ENCODE measurements at regions of chr4 and their contacts with region 1.

Region 1: GRCh38 chr4:153573881-153574802 is 108.0 kb downstream of the TMEM131L start:
- DNase-seq: peak; percentile 64
- H3K4me3 ChIP-seq: no peak overlapping the region
- H3K27ac ChIP-seq: no peak overlapping the region
- H3K27me3 ChIP-seq: no peaks in the 10 kb centered on the region
- CTCF ChIP-seq: peak; percentile 74

Region 2: DNA sequence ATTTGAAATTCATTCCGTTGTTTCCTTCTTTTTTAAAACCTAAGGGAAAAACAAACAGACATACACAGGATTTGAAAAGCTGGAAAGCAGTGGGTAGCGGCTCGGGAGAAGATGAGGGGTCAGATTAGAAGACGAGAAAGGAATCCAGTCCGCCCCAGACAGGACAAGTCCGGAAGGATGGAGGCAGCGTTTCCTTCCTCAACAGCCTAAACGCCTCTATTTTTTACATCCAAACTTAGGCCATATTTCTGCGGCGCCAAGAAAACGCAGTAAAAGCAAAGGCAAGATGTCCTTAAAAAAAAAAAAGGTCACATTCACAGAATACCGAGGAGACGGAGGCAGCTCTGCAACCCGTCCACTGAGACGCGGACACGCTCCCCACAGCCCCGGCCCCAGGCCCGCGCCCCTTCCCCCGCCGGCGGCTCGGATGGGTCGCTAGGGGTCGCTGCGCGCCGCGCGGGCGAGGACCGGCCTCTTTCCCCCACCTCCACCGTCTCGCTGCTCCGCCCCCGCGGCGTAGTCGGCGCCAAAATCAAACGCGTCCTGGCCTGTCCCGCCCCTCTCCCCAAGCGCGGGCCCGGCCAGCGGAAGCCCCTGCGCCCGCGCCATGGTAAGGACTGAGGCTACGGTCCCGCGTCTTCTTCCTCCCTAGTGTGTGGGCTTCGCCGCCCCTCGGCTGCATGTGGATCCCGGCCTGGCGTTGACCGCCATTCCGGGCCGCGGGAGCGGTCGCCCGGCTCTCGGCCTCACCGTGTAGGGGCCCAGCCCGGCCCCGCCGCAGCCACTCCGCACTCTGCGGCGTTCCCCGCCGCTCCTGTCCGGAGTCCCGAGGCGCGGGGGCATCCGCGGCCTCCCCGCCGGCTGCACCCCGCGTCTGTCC is 229.8 kb before region 1 on chr4 and contains the start of gene MND1:
- CTCF ChIA-PET with region 1: interaction called, 105 read pairs
- POLR2A ChIA-PET with region 1: no interaction called
- DNase-seq: no peak
- H3K4me3 ChIP-seq: peak within 1 kb of the TSS; percentile 79
- H3K27ac ChIP-seq: no peak within 1 kb of the TSS
- H3K27me3 ChIP-seq: no peaks in the 10 kb centered on the region
- CTCF ChIP-seq: peak; percentile 77
- polyA plus RNA-seq, gene MND1: 0.97 and 2.2 TPM in 2 replicates

Region 3: GRCh38 chr4:153448003-153448731 is 126.0 kb before region 1 on chr4:
- CTCF ChIA-PET with region 1: interaction called, 14 read pairs
- POLR2A ChIA-PET with region 1: no interaction called
- DNase-seq: peak; percentile 56
- H3K4me3 ChIP-seq: no peak overlapping the region
- H3K27ac ChIP-seq: no peak overlapping the region
- H3K27me3 ChIP-seq: no peaks in the 10 kb centered on the region
- CTCF ChIP-seq: no peak

Region 4: DNA sequence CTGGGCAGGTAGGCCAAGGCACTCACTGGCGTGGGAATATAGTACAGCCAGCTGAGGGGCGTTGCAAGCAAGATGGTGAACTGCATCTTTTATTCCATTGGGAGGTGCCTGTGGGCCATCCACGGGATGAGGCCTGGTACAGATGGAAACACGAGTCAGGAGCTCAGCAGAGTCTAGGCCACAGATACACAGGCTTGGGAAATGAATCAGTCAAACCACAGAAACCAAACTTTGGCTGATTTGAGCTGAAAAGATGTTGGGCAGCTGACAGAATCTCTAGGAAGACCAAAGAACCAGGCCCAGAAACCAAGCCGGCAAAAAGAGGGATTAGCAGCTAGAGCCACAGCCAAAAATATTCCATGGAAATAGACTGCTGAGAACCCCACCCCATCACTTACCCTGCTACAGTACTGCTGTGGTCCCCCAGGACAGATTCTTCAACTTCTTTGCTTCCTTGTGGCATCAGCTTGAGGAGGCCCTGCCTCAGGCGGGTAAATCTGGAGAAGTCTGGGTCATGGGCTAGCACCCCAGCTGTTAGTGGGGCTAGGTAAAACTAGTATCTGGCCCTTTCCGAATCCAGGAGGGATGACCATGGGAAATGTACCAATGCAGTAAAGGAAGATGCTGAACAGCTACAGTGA is 32.6 kb before region 1 on chr4:
- CTCF ChIA-PET with region 1: interaction called, 21 read pairs
- POLR2A ChIA-PET with region 1: interaction called, 3 read pairs
- DNase-seq: peak; percentile 78
- H3K4me3 ChIP-seq: no peak overlapping the region
- H3K27ac ChIP-seq: peak overlapping the region; percentile 63
- H3K27me3 ChIP-seq: no peaks in the 10 kb centered on the region
- CTCF ChIP-seq: peak; percentile 39

Region 5: DNA sequence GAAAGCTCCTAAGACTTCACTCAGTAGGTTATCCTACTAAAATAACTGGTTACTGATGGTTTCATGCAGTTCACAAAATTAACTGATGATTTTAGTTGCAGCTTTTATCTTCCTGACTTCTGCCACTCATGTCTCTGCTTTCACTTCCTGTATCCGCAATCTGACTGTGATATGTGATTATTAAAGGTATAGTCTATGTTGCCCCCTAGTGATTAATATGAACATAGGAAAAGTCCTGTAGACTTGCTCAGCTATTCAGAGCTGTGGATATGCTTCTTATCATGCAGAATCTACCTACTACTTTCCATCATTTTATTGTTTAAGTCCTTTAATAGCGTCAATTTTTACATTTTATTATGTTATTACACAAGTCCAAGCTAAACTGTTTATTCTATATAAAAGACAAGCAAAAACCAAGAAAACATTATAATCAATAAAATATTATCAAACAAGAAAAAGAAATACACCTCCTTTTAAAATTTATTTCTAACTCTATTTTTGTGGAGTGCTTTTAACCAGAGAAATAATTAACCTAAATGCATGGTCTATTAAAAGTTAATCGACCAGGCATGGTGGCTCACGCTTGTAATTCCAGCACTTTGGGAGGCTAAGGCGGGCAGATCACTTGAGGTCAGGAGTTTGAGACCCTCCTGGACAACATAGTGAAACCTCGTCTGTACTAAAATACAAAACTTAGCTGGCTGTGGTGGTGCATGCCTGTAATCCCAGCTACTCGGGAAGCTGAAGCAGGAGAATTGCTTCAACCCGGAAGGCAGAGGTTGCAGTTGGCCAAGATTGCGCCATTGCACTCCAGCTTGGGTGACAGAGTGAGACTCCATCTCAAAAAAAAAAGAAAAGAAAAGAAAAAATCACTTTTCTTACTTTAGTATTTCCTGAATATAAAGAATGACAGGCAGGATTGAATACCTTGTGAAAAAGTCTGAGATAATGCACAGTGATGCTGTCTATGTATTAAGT is 69.6 kb after region 1 on chr4:
- CTCF ChIA-PET with region 1: interaction called, 10 read pairs
- POLR2A ChIA-PET with region 1: no interaction called
- DNase-seq: no peak
- H3K4me3 ChIP-seq: no peak overlapping the region
- H3K27ac ChIP-seq: no peak overlapping the region
- H3K27me3 ChIP-seq: no peaks in the 10 kb centered on the region
- CTCF ChIP-seq: peak; percentile 61